ENCODE measurements at regions of chr11 and their contacts with region 1.

Region 1: GRCh38 chr11:62726915-62727763 is at the start of gene HNRNPUL2:
- DNase-seq: peak; percentile 96 to 100 (median 98)
- ATAC-seq: peak; percentile 80
- H3K4me3 ChIP-seq: peak within 1 kb of the TSS; percentile 65
- H3K4me3 Mint-ChIP-seq: peak within 1 kb of the TSS; percentile 93
- H3K27ac ChIP-seq: peak within 1 kb of the TSS; percentile 93 to 97
- H3K27ac Mint-ChIP-seq: peak within 1 kb of the TSS; percentile 98
- H3K4me1 ChIP-seq: peaks cover 52% of the 10 kb centered on the region
- H3K4me1 Mint-ChIP-seq: peaks cover 73% of the 10 kb centered on the region
- H3K27me3 ChIP-seq: no peaks in the 10 kb centered on the region
- H3K27me3 Mint-ChIP-seq: no peaks in the 10 kb centered on the region
- CTCF ChIP-seq: no peak
- total RNA-seq, gene HNRNPUL2: 35.2 to 37.6 TPM

Region 2: DNA sequence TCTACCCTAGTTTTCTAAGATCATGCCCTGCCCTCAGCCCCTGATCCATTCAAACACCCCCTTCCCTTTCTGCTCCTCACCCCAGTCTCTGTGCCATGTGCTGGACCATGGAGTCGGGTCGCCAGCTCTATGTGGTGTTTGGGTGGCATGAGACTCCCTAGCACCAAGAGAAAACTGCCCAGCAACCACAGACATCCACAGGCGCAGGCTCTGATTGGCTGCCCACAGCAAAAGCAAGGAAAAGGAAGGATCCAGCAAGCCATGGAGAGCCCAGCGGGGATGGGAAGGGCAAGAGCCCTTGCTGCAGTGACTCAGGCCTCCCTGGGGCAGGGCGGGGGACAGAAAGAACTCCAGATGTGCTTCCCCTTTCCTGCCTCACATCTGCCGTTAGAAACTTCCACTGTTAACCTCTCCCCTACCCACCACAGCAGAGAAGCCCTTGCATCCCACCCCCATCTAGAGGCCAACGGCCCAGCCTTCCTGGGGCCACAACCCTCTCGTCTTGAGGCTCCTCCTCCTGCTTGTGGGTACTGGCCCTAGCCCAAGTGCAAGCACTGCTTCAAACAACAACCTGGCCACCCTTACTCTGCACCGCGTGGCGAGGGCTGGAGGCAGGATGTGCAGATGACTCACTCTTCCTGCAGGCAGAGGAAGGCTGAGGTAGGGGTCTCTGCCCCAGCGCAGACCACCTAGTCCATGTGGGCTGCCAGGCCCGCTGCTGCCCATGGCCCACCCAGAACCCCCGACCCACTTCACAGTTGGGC is 170.8 kb before region 1 on chr11:
- CTCF ChIA-PET with region 1: no interaction called
- POLR2A ChIA-PET with region 1: interaction called, 12 read pairs
- intact Hi-C with region 1: no loop called
- DNase-seq: peak; percentile 72 to 94 (median 83)
- ATAC-seq: peak; percentile 46
- H3K4me3 ChIP-seq: peak overlapping the region; percentile 49
- H3K4me3 Mint-ChIP-seq: peak overlapping the region; percentile 84
- H3K27ac ChIP-seq: peak overlapping the region; percentile 96 to 97
- H3K27ac Mint-ChIP-seq: peak overlapping the region; percentile 95
- H3K4me1 ChIP-seq: peaks cover 95% of the 10 kb centered on the region
- H3K4me1 Mint-ChIP-seq: peaks cover 84% of the 10 kb centered on the region
- H3K27me3 ChIP-seq: no peaks in the 10 kb centered on the region
- H3K27me3 Mint-ChIP-seq: no peaks in the 10 kb centered on the region
- CTCF ChIP-seq: no peak

Region 3: GRCh38 chr11:62652161-62653006 is 74.8 kb before region 1 on chr11:
- CTCF ChIA-PET with region 1: no interaction called
- POLR2A ChIA-PET with region 1: interaction called, 16 read pairs
- intact Hi-C with region 1: no loop called
- DNase-seq: peak in 4 of 14 experiments; percentile 43 to 62 (median 51)
- ATAC-seq: peak; percentile 5
- H3K4me3 ChIP-seq: peak overlapping the region; percentile 96
- H3K4me3 Mint-ChIP-seq: peak overlapping the region; percentile 94
- H3K27ac ChIP-seq: peak overlapping the region; percentile 89 to 94
- H3K27ac Mint-ChIP-seq: peak overlapping the region; percentile 97
- H3K4me1 ChIP-seq: peaks cover 28% of the 10 kb centered on the region
- H3K4me1 Mint-ChIP-seq: peaks cover 17% of the 10 kb centered on the region
- H3K27me3 ChIP-seq: no peaks in the 10 kb centered on the region
- H3K27me3 Mint-ChIP-seq: no peaks in the 10 kb centered on the region
- CTCF ChIP-seq: no peak

Region 4: GRCh38 chr11:62713343-62713742 is 13.8 kb before region 1 on chr11:
- CTCF ChIA-PET with region 1: interaction called, 4 read pairs
- POLR2A ChIA-PET with region 1: interaction called, 165 read pairs
- intact Hi-C with region 1: loop called (anchors 1 kb)
- DNase-seq: no peak
- ATAC-seq: no peak
- H3K4me3 ChIP-seq: no peak overlapping the region
- H3K4me3 Mint-ChIP-seq: no peak overlapping the region
- H3K27ac ChIP-seq: peak overlapping the region in 1 of 2 donors; percentile 50
- H3K27ac Mint-ChIP-seq: peak overlapping the region; percentile 50
- H3K4me1 ChIP-seq: peaks cover 43% of the 10 kb centered on the region
- H3K4me1 Mint-ChIP-seq: peaks cover 59% of the 10 kb centered on the region
- H3K27me3 ChIP-seq: no peaks in the 10 kb centered on the region
- H3K27me3 Mint-ChIP-seq: no peaks in the 10 kb centered on the region
- CTCF ChIP-seq: no peak

Region 5: DNA sequence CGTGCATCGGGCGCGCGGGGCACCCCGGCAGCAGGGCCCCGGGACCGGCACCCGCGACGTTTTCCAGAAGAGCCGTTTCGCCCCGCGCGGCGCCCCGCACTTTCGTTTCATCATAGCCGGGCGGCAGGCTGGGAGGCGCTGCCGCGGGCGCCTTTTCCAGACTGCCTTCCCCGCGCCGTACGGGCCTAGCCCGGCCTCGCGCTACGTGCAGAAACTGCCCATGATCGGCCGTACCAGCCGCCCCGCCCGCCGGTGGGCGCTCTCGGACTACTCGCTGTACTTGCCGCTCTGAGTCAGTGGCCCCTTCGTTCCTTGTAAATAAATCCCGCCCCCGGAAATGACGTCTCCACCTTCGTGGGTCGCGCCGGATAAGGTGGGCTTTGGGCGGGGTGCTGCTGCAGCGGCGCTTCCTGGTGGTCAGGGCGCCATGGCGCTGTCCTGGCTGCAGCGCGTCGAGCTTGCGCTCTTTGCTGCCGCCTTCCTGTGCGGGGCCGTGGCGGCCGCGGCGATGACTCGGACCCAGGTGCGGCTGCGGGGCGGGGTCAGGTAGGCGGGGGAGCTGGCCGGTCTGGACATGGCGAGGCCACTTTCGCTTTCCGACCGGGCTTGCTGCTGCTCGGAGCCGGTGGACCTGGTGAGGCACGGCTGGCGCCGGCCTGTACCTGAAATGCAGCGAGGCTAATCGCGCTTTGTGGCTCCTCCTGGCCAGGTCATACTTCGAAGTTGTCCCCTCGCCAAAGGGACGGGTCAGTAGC is 60.0 kb after region 1 on chr11 and contains the start of gene TMEM179B:
- CTCF ChIA-PET with region 1: interaction called, 44 read pairs
- POLR2A ChIA-PET with region 1: interaction called, 73 read pairs
- intact Hi-C with region 1: no loop called
- DNase-seq: peak; percentile 90 to 99 (median 97)
- ATAC-seq: peak; percentile 61
- H3K4me3 ChIP-seq: peak within 1 kb of the TSS; percentile 77
- H3K4me3 Mint-ChIP-seq: peak within 1 kb of the TSS; percentile 98
- H3K27ac ChIP-seq: peak within 1 kb of the TSS; percentile 80 to 92
- H3K27ac Mint-ChIP-seq: peak within 1 kb of the TSS; percentile 98
- H3K4me1 ChIP-seq: peaks cover 53% of the 10 kb centered on the region
- H3K4me1 Mint-ChIP-seq: peaks cover 55% of the 10 kb centered on the region
- H3K27me3 ChIP-seq: no peaks in the 10 kb centered on the region
- H3K27me3 Mint-ChIP-seq: no peaks in the 10 kb centered on the region
- CTCF ChIP-seq: no peak
- total RNA-seq, gene TMEM179B: 34.7 to 37.4 TPM

Region 6: GRCh38 chr11:62860835-62861563 is 133.9 kb after region 1 on chr11:
- CTCF ChIA-PET with region 1: no interaction called
- POLR2A ChIA-PET with region 1: interaction called, 79 read pairs
- intact Hi-C with region 1: loop called in 1 of 2 experiments (anchors 1 kb)
- DNase-seq: no peak
- ATAC-seq: no peak
- H3K4me3 ChIP-seq: no peak overlapping the region
- H3K4me3 Mint-ChIP-seq: no peak overlapping the region
- H3K27ac ChIP-seq: no peak overlapping the region
- H3K27ac Mint-ChIP-seq: no peak overlapping the region
- H3K4me1 ChIP-seq: peaks cover 18% of the 10 kb centered on the region
- H3K4me1 Mint-ChIP-seq: peaks cover 18% of the 10 kb centered on the region
- H3K27me3 ChIP-seq: no peaks in the 10 kb centered on the region
- H3K27me3 Mint-ChIP-seq: no peaks in the 10 kb centered on the region
- CTCF ChIP-seq: no peak